OCI-LY7 (cell line): ENCODE measurements at regions of chr19 and their contacts with region 1.

Region 1: DNA sequence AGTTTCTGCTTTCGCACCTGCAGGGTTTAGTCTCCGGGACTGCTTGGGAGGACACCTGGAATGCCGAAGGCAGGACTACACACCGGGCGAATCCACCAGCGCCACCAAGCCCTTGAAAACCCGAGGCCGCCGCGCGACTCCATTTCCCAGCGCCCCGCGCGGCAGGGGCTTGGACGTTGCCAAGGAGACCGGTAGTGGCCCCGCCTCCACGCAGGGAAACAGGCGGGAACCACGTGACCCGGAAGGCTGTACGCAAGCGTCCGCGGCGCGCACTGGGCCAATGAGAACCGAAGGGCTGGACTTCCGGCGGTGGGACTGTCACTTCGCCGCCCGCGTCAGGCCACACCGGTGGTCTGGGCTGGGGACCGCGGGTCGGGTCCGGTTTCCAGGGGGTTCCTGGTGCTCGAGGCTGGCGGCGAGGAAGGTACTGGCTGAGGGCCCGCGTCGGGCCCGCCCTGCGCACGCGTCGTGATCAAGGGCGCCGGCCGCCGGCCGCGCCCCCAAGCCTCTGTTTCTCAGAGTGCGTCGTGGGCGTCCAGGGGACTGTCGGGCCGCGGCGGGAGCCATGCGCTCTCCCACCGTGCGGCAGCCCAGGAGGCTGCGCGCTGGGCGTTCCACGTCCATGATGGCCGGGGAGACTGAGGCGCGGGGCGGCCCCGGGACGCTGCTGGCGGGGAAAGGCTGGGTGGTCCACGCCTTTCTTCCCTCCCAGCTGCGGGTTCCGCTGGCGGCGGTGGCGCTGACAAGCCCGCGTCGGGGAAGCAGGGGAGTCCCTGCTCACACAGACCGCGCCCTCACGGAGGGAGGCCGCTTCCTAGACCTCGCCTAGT is at the start of gene ZNF324:
- DNase-seq: peak; percentile 99
- H3K4me3 ChIP-seq: peak within 1 kb of the TSS; percentile 81
- H3K27ac ChIP-seq: no peak within 1 kb of the TSS
- H3K4me1 ChIP-seq: peaks cover 12% of the 10 kb centered on the region
- CTCF ChIP-seq: peak; percentile 43; the same call in 1 of the 2 replicates
- total RNA-seq, gene ZNF324: 16.5 and 23.3 TPM in 2 replicates

Region 2: GRCh38 chr19:58218899-58219298 is 248.1 kb before region 1 on chr19:
- CTCF ChIA-PET with region 1: no interaction called
- POLR2A ChIA-PET with region 1: no interaction called
- intact Hi-C with region 1: loop called (anchors 2 kb)
- DNase-seq: peak; percentile 54
- H3K4me3 ChIP-seq: no peak overlapping the region
- H3K27ac ChIP-seq: no peak overlapping the region
- H3K4me1 ChIP-seq: no peaks in the 10 kb centered on the region
- CTCF ChIP-seq: peak; percentile 67

Region 3: DNA sequence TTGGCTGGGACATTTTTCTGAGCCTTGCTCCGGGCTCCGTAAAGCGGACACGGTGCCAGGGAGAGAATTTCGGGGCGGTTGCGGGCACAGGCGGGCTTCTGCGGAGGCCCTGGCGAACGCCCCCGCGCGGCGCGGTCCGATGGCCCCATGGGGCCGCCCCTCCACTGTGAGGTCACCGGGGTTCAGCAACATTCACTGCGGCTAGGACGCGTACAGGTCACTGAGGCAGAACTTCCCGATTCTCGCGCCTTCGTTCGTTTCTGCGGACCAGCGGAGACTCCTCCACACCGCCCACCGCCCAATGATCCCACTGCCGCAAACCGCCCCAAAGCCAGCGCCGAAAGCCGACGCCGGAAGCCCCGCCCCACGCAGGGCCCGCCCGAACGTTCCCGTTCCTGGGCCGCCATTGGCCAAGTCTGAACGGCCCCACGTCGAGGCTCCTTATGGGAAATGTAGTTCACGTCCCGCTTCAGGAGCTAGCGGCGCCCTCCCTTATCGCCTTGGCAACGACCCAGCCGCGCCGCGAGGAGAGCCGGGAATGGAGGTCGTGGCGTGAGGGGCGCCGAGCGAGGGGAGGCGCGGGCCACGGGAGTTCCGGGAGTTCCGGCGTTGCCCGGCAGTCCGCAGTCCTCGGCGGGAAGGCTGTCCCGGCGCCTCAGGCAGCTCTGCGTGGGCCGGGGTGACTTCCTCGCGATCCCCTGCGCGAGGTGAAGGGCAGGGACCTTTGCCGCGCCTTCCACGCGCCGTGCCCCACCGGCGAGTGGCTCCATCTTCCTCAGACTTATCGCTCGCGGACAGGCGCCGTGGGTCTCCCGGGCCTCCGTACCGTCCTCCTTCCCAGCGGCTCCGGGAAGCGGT is 58.6 kb before region 1 on chr19 and contains the start of gene ZNF584:
- CTCF ChIA-PET with region 1: no interaction called
- POLR2A ChIA-PET with region 1: interaction called, 3 read pairs
- intact Hi-C with region 1: loop called (anchors 2 kb)
- DNase-seq: peak; percentile 97
- H3K4me3 ChIP-seq: peak within 1 kb of the TSS; percentile 83
- H3K27ac ChIP-seq: peak within 1 kb of the TSS; percentile 47
- H3K4me1 ChIP-seq: peaks cover 20% of the 10 kb centered on the region
- CTCF ChIP-seq: peak; percentile 45
- total RNA-seq, gene ZNF584: 9.8 and 12.4 TPM in 2 replicates